ENCODE measurements at regions of chr14 and their contacts with region 1.

Region 1: GRCh38 chr14:74612350-74613021 is 449 bp upstream of the LTBP2 start:
- DNase-seq: peak; percentile 89 to 94
- ATAC-seq: peak; percentile 89
- H3K4me3 ChIP-seq: peak overlapping the region; percentile 60 to 93
- H3K27ac ChIP-seq: peak overlapping the region in 1 of 2 donors; percentile 25
- H3K4me1 ChIP-seq: peaks cover 5 to 7% of the 10 kb centered on the region in 2 donors
- H3K27me3 ChIP-seq: no peaks in the 10 kb centered on the region

Region 2: DNA sequence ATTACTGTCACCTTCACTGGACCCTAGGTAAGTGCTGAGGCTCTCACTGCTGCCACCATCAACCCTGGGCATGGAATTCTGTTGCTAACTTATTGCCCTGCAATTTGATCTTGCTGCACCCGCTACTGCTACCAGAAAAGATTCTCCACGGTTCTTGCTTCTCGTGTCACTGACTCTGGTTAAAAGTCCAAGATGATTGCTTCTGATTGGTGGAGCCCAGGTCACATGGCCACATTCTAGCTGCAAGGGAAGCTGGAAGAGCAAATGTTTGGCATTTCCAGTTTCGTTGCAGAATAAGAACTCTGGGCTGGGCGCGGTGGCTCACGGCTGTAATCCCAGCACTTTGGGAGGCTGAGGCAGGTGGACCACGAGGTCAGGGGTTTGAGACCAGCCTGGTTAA is 380.7 kb before region 1 on chr14:
- intact Hi-C with region 1: no loop called
- DNase-seq: no peak
- ATAC-seq: no peak
- H3K4me3 ChIP-seq: no peak overlapping the region
- H3K27ac ChIP-seq: no peak overlapping the region
- H3K4me1 ChIP-seq: no peaks in the 10 kb centered on the region
- H3K27me3 ChIP-seq: no peaks in the 10 kb centered on the region

Region 3: DNA sequence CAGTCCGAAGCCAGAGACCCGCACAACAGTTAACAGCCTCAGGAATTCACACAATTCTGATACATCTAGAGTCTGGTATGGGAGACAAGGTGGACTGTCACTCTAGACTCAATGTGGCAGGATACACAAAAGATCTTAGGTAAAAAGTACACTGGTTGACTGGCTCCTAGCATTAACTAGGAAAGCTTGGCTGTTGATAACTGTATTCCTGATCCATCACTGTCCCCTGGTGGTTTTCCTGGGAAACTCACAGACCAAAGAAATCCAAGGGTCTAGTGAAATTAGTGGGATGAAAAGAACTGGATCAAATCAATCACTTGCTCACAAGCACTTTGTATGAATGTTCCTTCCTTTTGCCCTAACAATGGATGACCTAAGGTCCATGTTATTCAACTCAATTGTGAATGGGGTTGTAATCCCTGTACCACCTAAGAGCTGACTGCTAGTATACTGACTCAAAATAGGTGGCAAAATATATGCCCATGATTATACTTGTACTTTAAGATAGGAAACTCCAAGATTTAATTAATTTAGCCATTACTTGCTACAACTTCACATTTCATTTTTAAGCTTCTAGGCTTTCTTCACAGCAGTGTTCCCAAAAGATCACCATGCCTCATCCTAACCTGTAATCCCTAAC is 133.4 kb before region 1 on chr14:
- intact Hi-C with region 1: no loop called
- DNase-seq: no peak
- ATAC-seq: no peak
- H3K4me3 ChIP-seq: no peak overlapping the region
- H3K27ac ChIP-seq: no peak overlapping the region
- H3K4me1 ChIP-seq: peaks cover 0 to 2% of the 10 kb centered on the region in 2 donors
- H3K27me3 ChIP-seq: no peaks in the 10 kb centered on the region

Region 4: GRCh38 chr14:74501135-74501614 is 111.3 kb before region 1 on chr14:
- intact Hi-C with region 1: loop called (anchors 2 to 5 kb)
- DNase-seq: peak; percentile 84 to 94
- ATAC-seq: peak; percentile 60
- H3K4me3 ChIP-seq: no peak overlapping the region
- H3K27ac ChIP-seq: peak overlapping the region in 1 of 2 donors; percentile 24
- H3K4me1 ChIP-seq: no peaks in the 10 kb centered on the region
- H3K27me3 ChIP-seq: no peaks in the 10 kb centered on the region

Region 5: DNA sequence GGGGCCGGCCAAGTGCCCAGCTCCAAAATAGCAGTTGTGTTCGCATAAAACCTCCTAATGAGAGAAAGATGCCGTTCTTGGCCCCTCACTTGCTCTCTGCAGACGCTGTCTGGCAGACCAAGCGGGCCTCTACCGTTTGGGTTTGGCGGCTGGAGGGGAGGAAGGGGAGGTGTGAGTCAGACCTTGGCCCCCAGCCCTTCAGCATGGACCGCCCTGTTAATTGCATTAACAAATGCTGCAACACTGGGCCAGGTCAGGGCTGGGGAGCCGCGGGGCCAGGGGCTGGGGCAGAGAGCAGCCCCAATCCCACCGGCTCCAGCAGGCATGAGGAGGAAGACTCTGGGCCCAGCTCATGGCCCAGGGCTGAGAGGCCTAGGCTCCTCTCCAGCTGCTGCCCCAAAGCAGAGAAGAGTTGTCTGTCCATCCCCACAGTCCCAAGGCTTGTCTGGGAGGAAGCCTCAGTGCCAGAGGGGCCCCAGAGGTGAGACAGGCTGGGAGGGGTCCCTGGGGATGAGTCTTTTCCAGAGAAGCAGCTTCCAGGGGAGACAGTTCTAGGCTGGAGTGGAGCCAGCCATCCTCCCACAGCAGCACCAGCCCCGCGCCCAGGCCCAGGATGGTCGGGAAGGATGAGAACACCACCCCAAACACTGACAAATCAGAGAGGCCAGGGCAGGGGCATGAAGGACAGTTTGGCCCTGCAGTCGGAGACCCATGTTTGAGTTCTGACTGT is 17.3 kb before region 1 on chr14:
- intact Hi-C with region 1: no loop called
- DNase-seq: peak; percentile 91
- ATAC-seq: peak; percentile 76
- H3K4me3 ChIP-seq: no peak overlapping the region
- H3K27ac ChIP-seq: peak overlapping the region; percentile 34 to 87
- H3K4me1 ChIP-seq: peaks cover 8 to 12% of the 10 kb centered on the region in 2 donors
- H3K27me3 ChIP-seq: no peaks in the 10 kb centered on the region

Region 6: GRCh38 chr14:74671789-74672188 is 59.3 kb after region 1 on chr14:
- intact Hi-C with region 1: loop called in 1 of 2 experiments (anchors 5 kb)
- DNase-seq: peak in 1 of 2 donors; percentile 68
- ATAC-seq: peak; percentile 66
- H3K4me3 ChIP-seq: no peak overlapping the region
- H3K27ac ChIP-seq: peak overlapping the region; percentile 28 to 69
- H3K4me1 ChIP-seq: no peaks in the 10 kb centered on the region
- H3K27me3 ChIP-seq: no peaks in the 10 kb centered on the region

Region 7: DNA sequence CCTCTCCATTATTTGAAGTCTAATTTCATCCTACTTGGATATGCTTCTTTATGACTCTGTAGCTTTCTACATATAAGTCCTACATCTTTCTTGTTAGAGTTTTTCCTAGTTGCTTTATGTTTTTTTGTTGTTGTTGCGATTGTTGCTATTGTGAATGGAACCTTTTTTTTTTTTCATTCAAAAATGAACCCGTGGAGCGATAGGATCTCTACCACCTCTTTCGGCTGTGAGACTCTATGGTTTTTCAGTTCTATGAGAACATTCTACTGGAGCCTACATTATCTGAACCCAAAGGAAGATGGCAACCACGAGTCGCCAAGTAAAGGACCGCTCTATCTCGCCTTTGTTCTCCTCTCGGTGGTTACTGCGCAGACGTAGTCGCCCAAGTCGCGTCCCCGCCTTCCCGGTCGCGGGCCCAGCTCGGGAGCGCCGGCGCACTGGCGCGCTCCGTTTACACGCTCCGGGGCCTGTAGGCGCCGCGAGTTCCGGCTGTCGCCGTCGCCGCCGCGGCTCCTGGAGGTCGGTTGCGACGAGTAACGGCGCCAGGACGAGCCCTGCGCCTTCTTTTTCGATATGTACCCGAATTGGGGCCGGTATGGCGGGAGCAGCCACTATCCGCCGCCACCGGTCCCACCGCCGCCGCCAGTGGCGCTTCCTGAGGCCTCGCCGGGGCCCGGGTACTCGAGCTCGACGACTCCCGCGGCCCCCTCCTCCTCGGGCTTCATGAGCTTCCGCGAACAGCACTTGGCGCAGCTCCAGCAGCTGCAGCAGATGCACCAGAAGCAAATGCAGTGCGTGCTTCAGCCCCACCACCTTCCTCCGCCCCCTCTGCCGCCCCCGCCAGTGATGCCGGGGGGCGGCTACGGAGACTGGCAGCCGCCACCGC is 150.7 kb after region 1 on chr14 and contains the start of gene YLPM1:
- intact Hi-C with region 1: loop called in 1 of 2 experiments (anchors 5 kb)
- DNase-seq: peak; percentile 95 to 96
- ATAC-seq: peak; percentile 99
- H3K4me3 ChIP-seq: peak within 1 kb of the TSS; percentile 57 to 66
- H3K27ac ChIP-seq: peak within 1 kb of the TSS in 1 of 2 donors; percentile 68
- H3K4me1 ChIP-seq: peaks cover 0 to 2% of the 10 kb centered on the region in 2 donors
- H3K27me3 ChIP-seq: no peaks in the 10 kb centered on the region
- total RNA-seq, gene YLPM1: 58.4 to 79.9 TPM

Region 8: DNA sequence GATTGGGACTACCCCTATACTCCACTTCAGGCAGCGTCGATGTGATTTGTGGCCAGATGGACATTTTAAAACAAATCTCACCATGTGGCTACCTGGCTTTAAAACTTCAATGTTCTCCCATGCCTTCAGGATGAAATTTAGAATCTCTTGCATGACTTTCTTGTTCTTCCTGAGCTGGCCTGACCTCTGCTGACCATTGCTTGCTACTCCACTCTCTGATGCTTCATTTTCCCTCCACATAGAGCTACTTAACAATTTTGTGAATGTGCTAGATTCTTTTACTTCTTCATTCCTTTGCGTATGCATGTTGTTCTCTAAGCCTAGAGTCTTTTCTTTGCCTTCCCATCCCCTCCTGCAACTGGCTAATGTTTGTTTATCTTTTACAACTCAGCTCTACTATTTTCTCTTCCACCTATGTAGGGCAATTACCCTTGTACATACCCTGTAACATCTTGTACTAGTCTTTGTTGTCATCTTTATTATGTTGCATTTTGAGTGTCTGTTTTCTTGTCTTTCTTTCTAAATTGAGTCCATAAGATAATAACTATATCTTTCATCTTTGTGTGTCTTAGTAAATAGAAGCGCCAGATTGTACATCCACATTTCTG is 191.8 kb after region 1 on chr14:
- intact Hi-C with region 1: loop called in 1 of 2 experiments (anchors 2 kb)
- DNase-seq: no peak
- ATAC-seq: no peak
- H3K4me3 ChIP-seq: no peak overlapping the region
- H3K27ac ChIP-seq: no peak overlapping the region
- H3K4me1 ChIP-seq: no peaks in the 10 kb centered on the region
- H3K27me3 ChIP-seq: no peaks in the 10 kb centered on the region